CD8-positive, alpha-beta T cell (primary cell): ENCODE measurements at regions of chr19 and their contacts with region 1.

Region 1: DNA sequence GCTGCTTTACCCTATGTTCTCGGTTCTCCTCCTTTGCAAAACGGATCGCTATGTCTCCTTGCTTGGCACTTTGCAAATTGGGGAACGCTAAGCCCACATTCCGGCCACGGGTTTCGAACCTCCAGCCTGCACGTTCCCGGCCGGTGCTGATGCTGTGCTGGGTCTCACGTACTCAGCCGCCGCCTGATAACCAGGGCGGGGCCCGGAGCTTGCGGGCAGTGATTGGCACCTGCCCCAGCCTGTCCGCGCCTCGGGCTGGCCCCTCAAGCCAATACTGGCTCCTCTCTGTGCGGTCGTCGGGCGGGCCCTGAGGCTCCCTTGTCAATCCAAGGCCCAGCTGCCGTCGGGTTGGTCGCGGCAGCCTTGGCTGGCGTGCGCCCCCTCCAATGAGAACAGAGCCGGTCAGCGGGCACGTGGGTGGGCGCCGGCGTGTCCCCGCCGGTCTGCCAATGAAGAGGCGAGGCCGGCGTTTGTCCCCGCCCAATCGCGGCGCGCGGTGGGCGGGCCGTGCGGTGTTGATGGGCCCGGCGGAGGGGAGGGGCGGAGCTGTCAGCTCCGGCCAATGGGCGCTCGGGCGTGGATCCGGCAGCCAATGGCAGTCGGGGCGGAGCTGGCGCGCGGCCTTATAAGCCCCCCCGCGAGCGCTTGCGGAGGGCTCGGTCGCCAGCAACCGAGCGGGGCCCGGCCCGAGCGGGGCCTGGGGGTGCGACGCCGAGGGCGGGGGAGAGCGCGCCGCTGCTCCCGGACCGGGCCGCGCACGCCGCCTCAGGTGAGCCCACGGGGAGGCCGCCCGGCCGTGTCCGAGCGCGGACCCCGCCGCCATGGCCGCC is at the start of gene KDM4B:
- DNase-seq: peak; percentile 96 to 100 (median 99)
- ATAC-seq: peak; percentile 87
- H3K4me3 ChIP-seq: peak within 1 kb of the TSS; percentile 54 to 57
- H3K4me3 Mint-ChIP-seq: peak within 1 kb of the TSS; percentile 87
- H3K27ac ChIP-seq: peak within 1 kb of the TSS; percentile 33 to 60
- H3K27ac Mint-ChIP-seq: peak within 1 kb of the TSS; percentile 81
- H3K4me1 ChIP-seq: peaks cover 30% of the 10 kb centered on the region
- H3K4me1 Mint-ChIP-seq: peaks cover 30% of the 10 kb centered on the region
- H3K27me3 ChIP-seq: no peaks in the 10 kb centered on the region
- H3K27me3 Mint-ChIP-seq: no peaks in the 10 kb centered on the region
- CTCF ChIP-seq: no peak
- total RNA-seq, gene KDM4B: 111 to 121 TPM

Region 2: GRCh38 chr19:3275583-3276340 is 1692.9 kb before region 1 on chr19:
- CTCF ChIA-PET with region 1: no interaction called
- POLR2A ChIA-PET with region 1: no interaction called
- intact Hi-C with region 1: loop called in 1 of 2 experiments (anchors 10 kb)
- DNase-seq: peak; percentile 84 to 98 (median 93)
- ATAC-seq: peak; percentile 79
- H3K4me3 ChIP-seq: peak overlapping the region; percentile 59 to 84
- H3K4me3 Mint-ChIP-seq: peak overlapping the region; percentile 86
- H3K27ac ChIP-seq: peak overlapping the region; percentile 34 to 63
- H3K27ac Mint-ChIP-seq: peak overlapping the region; percentile 70
- H3K4me1 ChIP-seq: peaks cover 18% of the 10 kb centered on the region
- H3K4me1 Mint-ChIP-seq: peaks cover 17% of the 10 kb centered on the region
- H3K27me3 ChIP-seq: peaks cover 0 to 2% of the 10 kb centered on the region in 2 experiments
- H3K27me3 Mint-ChIP-seq: peaks cover 6% of the 10 kb centered on the region
- CTCF ChIP-seq: peak; percentile 14

Region 3: GRCh38 chr19:4867534-4868285 is 101.0 kb before region 1 on chr19 and contains the start of gene PLIN3:
- CTCF ChIA-PET with region 1: interaction called, 5 read pairs
- POLR2A ChIA-PET with region 1: interaction called, 4 read pairs
- intact Hi-C with region 1: loop called (anchors 1 to 2 kb)
- DNase-seq: peak; percentile 74 to 91 (median 87)
- ATAC-seq: peak; percentile 94
- H3K4me3 ChIP-seq: peak within 1 kb of the TSS; percentile 72 to 78
- H3K4me3 Mint-ChIP-seq: peak within 1 kb of the TSS; percentile 78
- H3K27ac ChIP-seq: peak within 1 kb of the TSS; percentile 30 to 55
- H3K27ac Mint-ChIP-seq: peak within 1 kb of the TSS; percentile 49
- H3K4me1 ChIP-seq: peaks cover 17% of the 10 kb centered on the region
- H3K4me1 Mint-ChIP-seq: peaks cover 16% of the 10 kb centered on the region
- H3K27me3 ChIP-seq: no peaks in the 10 kb centered on the region
- H3K27me3 Mint-ChIP-seq: no peaks in the 10 kb centered on the region
- CTCF ChIP-seq: no peak
- total RNA-seq, gene PLIN3: 16.2 to 16.7 TPM

Region 4: DNA sequence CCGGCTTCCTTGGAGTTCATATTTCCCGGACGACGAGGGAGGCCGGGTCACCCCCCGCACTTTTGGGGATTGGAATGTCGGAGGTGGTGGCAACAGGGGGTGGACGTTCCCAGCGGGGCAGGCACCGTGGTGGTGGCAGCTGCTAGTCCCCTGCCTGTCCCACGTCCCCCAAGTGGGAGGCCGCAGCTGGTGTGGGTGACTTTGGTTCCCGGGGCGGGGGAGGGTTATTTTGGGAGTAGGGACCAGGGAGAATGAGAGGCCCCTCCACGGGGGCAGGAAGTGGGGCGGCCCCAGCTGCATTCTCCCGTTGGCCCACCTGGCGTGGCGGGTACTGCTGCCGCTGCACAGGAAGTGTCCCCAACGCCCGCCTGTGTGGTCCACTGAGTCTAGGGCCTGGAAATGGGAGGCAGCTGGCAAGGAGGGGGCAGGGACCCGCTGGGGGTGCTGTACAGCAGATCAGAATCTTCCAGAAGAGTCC is 90.1 kb before region 1 on chr19:
- CTCF ChIA-PET with region 1: no interaction called
- POLR2A ChIA-PET with region 1: no interaction called
- intact Hi-C with region 1: no loop called
- DNase-seq: peak in 1 of 9 experiments; percentile 54
- ATAC-seq: peak; percentile 38
- H3K4me3 ChIP-seq: peak overlapping the region in 1 of 2 experiments; percentile 11
- H3K4me3 Mint-ChIP-seq: no peak overlapping the region
- H3K27ac ChIP-seq: no peak overlapping the region
- H3K27ac Mint-ChIP-seq: no peak overlapping the region
- H3K4me1 ChIP-seq: peaks cover 16% of the 10 kb centered on the region
- H3K4me1 Mint-ChIP-seq: peaks cover 16% of the 10 kb centered on the region
- H3K27me3 ChIP-seq: no peaks in the 10 kb centered on the region
- H3K27me3 Mint-ChIP-seq: no peaks in the 10 kb centered on the region
- CTCF ChIP-seq: no peak

Region 5: GRCh38 chr19:4909897-4910593 is 58.6 kb before region 1 on chr19:
- CTCF ChIA-PET with region 1: interaction called, 6 read pairs
- POLR2A ChIA-PET with region 1: interaction called, 61 read pairs
- intact Hi-C with region 1: loop called in 1 of 2 experiments (anchors 1 kb)
- DNase-seq: peak; percentile 85 to 96 (median 93)
- ATAC-seq: peak; percentile 82
- H3K4me3 ChIP-seq: peak overlapping the region; percentile 44 to 62
- H3K4me3 Mint-ChIP-seq: peak overlapping the region; percentile 99
- H3K27ac ChIP-seq: no peak overlapping the region
- H3K27ac Mint-ChIP-seq: no peak overlapping the region
- H3K4me1 ChIP-seq: peaks cover 57% of the 10 kb centered on the region
- H3K4me1 Mint-ChIP-seq: peaks cover 66% of the 10 kb centered on the region
- H3K27me3 ChIP-seq: no peaks in the 10 kb centered on the region
- H3K27me3 Mint-ChIP-seq: no peaks in the 10 kb centered on the region
- CTCF ChIP-seq: no peak

Region 6: GRCh38 chr19:4916292-4917082 is 52.2 kb before region 1 on chr19:
- CTCF ChIA-PET with region 1: interaction called, 6 read pairs
- POLR2A ChIA-PET with region 1: interaction called, 61 read pairs
- intact Hi-C with region 1: loop called (anchors 1 kb)
- DNase-seq: peak; percentile 19 to 82 (median 64)
- ATAC-seq: peak; percentile 30
- H3K4me3 ChIP-seq: peak overlapping the region; percentile 96 to 100
- H3K4me3 Mint-ChIP-seq: peak overlapping the region; percentile 99
- H3K27ac ChIP-seq: peak overlapping the region; percentile 90 to 96
- H3K27ac Mint-ChIP-seq: peak overlapping the region; percentile 100
- H3K4me1 ChIP-seq: peaks cover 34% of the 10 kb centered on the region
- H3K4me1 Mint-ChIP-seq: peaks cover 41% of the 10 kb centered on the region
- H3K27me3 ChIP-seq: no peaks in the 10 kb centered on the region
- H3K27me3 Mint-ChIP-seq: no peaks in the 10 kb centered on the region
- CTCF ChIP-seq: no peak

Region 7: DNA sequence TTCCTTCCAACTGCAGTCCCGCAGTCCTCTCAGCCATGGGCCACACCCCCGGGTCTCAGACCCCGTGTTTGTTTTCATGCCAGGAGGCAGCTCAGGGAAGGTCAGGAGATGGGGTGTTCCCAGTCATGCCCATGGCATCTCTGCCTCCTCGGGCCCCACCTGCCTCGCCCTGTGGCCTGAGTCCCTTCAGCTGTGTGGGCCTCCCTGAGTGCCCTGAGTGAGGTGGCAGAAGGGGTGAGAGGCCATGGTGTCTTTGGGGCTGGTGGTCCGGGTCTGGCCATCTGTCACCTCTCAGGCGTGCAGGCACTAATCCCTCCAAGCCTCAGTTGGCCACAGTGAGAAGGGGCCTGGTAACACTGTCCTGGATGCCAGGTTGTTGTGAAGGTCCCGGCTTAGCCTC is 10.7 kb before region 1 on chr19:
- CTCF ChIA-PET with region 1: no interaction called
- POLR2A ChIA-PET with region 1: interaction called, 10 read pairs
- intact Hi-C with region 1: no loop called
- DNase-seq: no peak
- ATAC-seq: no peak
- H3K4me3 ChIP-seq: no peak overlapping the region
- H3K4me3 Mint-ChIP-seq: no peak overlapping the region
- H3K27ac ChIP-seq: no peak overlapping the region
- H3K27ac Mint-ChIP-seq: no peak overlapping the region
- H3K4me1 ChIP-seq: no peaks in the 10 kb centered on the region
- H3K4me1 Mint-ChIP-seq: no peaks in the 10 kb centered on the region
- H3K27me3 ChIP-seq: no peaks in the 10 kb centered on the region
- H3K27me3 Mint-ChIP-seq: no peaks in the 10 kb centered on the region
- CTCF ChIP-seq: no peak